ENCODE measurements at regions of chr14 and their contacts with region 1.

Region 1: DNA sequence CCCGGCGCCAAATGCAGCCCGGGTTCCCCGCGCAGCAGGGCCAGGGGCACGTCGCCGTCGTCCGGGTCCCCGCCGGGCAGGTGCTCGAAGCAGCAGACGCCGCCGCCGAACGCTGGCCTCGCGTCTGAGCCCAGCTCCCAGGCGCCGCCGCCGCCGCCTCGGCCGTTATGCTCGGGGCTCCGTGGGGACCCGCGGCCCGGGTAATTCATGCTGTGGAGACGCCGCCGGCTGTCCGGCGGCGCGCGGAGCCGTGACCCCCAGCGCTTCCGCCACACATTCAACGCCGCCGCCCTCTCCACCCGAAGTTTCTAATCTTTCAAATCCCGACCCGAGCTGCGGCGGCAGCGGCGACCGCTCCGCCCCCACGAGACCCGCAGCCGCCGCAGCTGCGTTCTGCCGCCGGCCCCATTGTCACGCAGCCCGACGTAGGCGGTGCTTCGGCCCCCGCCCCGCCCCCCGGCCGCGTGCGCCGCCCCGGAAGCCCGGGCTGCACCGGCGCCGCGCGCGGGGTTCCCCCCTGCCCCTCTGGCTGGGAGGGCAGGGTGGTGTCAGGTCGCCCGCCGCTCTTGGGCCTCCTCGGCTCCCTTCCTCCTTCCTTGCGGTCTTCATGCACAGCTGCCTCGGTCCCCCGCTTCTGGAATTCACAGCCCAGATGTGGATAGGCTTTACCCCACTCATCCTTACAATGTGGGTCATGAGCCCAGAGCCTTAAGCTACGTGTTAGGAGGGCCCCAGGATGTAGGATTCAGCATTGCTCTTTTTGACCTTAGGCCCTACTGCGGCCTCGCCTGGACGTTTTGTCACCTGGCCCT is at the start of gene DDHD1:
- DNase-seq: peak; percentile 92
- ATAC-seq: peak; percentile 86
- H3K4me3 Mint-ChIP-seq: peak within 1 kb of the TSS; percentile 98
- H3K27ac Mint-ChIP-seq: peak within 1 kb of the TSS; percentile 98
- H3K4me1 Mint-ChIP-seq: peaks cover 48% of the 10 kb centered on the region
- H3K27me3 Mint-ChIP-seq: no peaks in the 10 kb centered on the region
- CTCF ChIP-seq: no peak
- total RNA-seq, gene DDHD1: 44.0 and 59.8 TPM in 2 replicates

Region 2: GRCh38 chr14:52706724-52707706 is 446.1 kb before region 1 on chr14 and contains the start of gene PSMC6:
- CTCF ChIA-PET with region 1: no interaction called
- POLR2A ChIA-PET with region 1: no interaction called
- intact Hi-C with region 1: loop called (anchors 5 kb)
- DNase-seq: peak; percentile 85
- ATAC-seq: peak; percentile 99
- H3K4me3 Mint-ChIP-seq: peak within 1 kb of the TSS; percentile 99
- H3K27ac Mint-ChIP-seq: peak within 1 kb of the TSS; percentile 98
- H3K4me1 Mint-ChIP-seq: peaks cover 25% of the 10 kb centered on the region
- H3K27me3 Mint-ChIP-seq: peaks cover 2% of the 10 kb centered on the region
- CTCF ChIP-seq: no peak
- total RNA-seq, gene PSMC6: 94.8 and 97.6 TPM in 2 replicates

Region 3: DNA sequence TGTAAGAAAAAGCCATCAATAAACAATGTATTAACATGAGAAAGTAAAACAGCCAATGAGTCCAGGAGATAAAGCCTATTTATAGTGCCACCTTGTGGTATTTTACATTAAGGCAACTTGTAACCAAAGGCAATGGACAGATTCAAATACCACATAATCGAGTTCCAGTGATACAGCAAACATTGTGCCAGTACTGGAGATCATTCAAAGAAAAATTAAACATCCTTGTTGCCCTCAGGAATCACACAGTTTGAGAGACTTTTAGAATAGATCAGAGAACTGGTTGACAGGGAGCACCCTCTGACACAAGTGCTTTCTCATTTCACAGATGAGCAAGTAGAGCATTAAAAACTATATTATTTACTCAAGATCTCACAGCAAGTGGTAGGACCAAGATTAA is 98.1 kb before region 1 on chr14:
- CTCF ChIA-PET with region 1: interaction called, 3 read pairs
- POLR2A ChIA-PET with region 1: interaction called, 3 read pairs
- intact Hi-C with region 1: loop called (anchors 2 kb)
- DNase-seq: no peak
- ATAC-seq: peak; percentile 56
- H3K4me3 Mint-ChIP-seq: no peak overlapping the region
- H3K27ac Mint-ChIP-seq: no peak overlapping the region
- H3K4me1 Mint-ChIP-seq: no peaks in the 10 kb centered on the region
- H3K27me3 Mint-ChIP-seq: no peaks in the 10 kb centered on the region
- CTCF ChIP-seq: peak; percentile 86

Region 4: DNA sequence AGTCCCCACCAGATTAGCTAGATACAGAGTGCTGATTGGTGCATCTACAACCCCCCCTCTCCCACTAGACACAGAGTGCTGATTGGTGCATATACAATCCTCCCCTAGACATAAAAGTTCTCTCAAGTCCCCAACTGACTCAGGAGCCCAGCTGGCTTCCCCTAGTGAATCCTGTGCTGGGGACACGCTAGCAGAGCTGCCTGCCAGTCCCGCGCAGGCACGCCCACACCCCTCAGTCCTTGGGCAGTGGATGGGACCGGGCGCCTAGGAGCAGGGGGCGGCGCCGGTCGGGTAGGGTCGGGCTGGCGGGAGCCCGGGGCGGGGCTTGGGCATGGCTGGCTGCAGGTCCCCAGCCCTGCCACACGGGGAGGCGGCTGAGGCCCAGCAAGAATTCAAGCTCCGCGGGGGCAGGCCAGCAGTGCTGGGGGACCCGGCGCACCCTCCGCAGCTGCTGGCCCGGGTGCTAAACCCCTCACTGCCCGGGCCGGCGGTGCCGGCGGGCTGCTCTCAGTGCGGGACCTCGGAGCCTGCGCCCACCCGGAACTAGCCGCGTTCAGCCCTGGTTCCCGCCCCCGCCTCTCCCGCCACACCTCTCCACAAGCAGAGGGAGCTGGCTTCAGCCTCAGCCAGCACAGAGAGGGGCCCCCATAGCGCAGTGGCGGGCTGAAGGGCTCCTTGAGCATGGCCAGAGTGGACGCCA is 64.3 kb after region 1 on chr14:
- CTCF ChIA-PET with region 1: interaction called, 3 read pairs
- POLR2A ChIA-PET with region 1: interaction called, 13 read pairs
- intact Hi-C with region 1: loop called (anchors 1 kb)
- DNase-seq: peak; percentile 78
- ATAC-seq: peak; percentile 98
- H3K4me3 Mint-ChIP-seq: peak overlapping the region; percentile 87
- H3K27ac Mint-ChIP-seq: peak overlapping the region; percentile 76
- H3K4me1 Mint-ChIP-seq: peaks cover 6% of the 10 kb centered on the region
- H3K27me3 Mint-ChIP-seq: no peaks in the 10 kb centered on the region
- CTCF ChIP-seq: no peak

Region 5: GRCh38 chr14:53338192-53338591 is 185.1 kb after region 1 on chr14:
- CTCF ChIA-PET with region 1: no interaction called
- POLR2A ChIA-PET with region 1: no interaction called
- intact Hi-C with region 1: no loop called
- DNase-seq: no peak
- ATAC-seq: no peak
- H3K4me3 Mint-ChIP-seq: no peak overlapping the region
- H3K27ac Mint-ChIP-seq: no peak overlapping the region
- H3K4me1 Mint-ChIP-seq: no peaks in the 10 kb centered on the region
- H3K27me3 Mint-ChIP-seq: no peaks in the 10 kb centered on the region
- CTCF ChIP-seq: no peak

Region 6: GRCh38 chr14:53710615-53711014 is 557.5 kb after region 1 on chr14:
- CTCF ChIA-PET with region 1: no interaction called
- POLR2A ChIA-PET with region 1: no interaction called
- intact Hi-C with region 1: no loop called
- DNase-seq: no peak
- ATAC-seq: no peak
- H3K4me3 Mint-ChIP-seq: no peak overlapping the region
- H3K27ac Mint-ChIP-seq: no peak overlapping the region
- H3K4me1 Mint-ChIP-seq: no peaks in the 10 kb centered on the region
- H3K27me3 Mint-ChIP-seq: peaks cover 4% of the 10 kb centered on the region
- CTCF ChIP-seq: no peak

Region 7: DNA sequence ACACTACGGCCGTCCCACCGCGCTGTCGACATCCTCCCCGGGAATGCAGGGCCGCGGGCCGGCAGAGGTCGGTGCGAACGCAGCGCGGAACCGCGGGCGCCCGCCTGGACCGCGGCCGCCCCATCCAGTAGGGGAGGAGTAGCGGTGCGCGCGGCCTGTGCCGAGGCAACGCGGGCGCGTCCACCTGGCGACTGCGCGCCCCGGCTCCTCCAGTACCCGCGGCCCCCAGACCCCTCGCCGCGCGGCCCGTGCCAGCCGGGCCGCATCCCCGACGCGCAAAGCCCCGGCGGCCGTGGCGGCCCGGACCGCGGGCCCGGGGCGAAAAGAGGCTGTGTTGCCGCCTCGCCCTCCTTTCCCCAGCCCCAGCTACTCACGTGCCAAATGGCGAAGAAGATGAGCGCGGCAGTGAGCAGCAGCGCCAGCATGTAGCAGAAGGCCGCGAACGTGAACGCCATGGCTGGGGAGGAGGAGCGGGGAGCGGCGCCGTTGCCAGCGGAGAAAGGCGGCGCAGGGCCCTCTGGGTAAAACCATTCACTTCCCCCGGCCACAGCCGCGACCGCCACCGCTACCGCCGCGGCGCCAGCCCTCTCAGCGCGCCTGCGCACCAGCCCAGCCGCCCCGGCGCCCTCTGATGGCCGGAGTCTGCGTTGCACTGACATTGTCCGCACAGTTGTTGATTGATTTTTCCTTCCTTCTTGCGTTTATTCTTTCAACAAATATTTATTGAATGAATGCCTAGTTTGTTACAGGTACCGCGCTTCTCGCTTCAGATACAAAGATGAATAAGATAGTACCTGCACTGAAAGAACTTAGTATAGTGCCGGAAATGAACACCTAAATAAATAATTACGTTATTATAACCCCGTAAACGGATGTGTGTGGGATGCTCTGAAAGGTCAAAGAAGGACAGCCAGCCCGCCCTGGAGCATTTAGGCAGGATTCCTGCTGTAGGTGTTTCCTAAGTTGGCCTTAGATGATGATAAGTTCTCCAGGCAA is 1288.1 kb after region 1 on chr14 and contains the start of gene CNIH1:
- CTCF ChIA-PET with region 1: no interaction called
- POLR2A ChIA-PET with region 1: no interaction called
- intact Hi-C with region 1: loop called (anchors 1 kb)
- DNase-seq: peak; percentile 98
- ATAC-seq: peak; percentile 95
- H3K4me3 Mint-ChIP-seq: peak within 1 kb of the TSS; percentile 86
- H3K27ac Mint-ChIP-seq: peak within 1 kb of the TSS; percentile 88
- H3K4me1 Mint-ChIP-seq: peaks cover 50% of the 10 kb centered on the region
- H3K27me3 Mint-ChIP-seq: peaks cover 3% of the 10 kb centered on the region
- CTCF ChIP-seq: peak; percentile 40
- total RNA-seq, gene CNIH1: 40.6 and 43.5 TPM in 2 replicates